ENCODE measurements at regions of chr3 and their contacts with region 1.

Region 1: DNA sequence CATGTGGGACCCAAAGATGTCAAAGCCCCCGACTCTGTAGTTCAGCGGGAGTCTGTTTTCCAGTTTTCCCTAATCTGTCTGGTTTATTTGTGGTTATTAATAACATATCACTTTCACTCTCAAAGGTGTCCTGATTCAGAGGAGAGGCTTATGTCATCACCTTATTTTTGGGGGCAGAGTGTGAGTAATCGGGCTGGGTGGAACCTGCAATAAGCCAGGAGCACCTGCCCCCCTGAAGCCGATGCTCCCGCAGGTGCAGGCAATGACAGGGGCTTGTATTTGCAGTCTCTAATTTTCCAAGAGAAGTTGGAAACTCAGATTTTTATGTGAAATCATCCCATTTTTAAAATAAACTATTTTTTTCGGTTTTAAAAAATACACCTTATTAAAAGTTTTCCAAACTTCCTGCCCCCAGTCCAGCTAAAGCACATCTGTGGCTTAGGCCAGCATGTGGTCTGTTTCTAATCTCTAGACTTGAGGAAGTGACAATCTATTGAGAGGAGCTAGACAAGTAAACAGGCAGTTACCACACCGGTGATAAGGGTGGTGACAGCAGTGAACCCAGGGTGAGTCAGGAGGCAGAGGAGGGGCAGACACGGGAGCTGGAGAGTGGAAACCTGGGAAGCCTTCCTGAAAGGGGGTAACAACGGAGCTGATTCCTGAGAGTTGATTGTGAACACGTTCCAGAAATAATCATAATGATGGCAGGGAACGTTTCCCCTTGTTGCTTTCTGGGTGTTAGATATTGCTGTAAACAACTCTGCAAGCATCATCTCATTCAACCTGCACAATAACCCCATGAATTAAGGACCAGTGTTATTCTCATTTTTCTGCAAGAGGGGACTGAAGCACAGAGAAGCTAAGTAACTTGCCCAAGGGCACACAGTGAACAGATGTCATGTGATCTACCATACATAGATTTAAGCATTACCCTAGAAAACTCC is 37.3 kb downstream of the BHLHE40 start:
- DNase-seq: no peak
- ATAC-seq: peak; percentile 66

Region 2: GRCh38 chr3:4271834-4272233 is 744.7 kb before region 1 on chr3:
- intact Hi-C with region 1: no loop called
- DNase-seq: no peak
- ATAC-seq: no peak

Region 3: GRCh38 chr3:4754180-4755086 is 262.1 kb before region 1 on chr3:
- intact Hi-C with region 1: no loop called
- DNase-seq: no peak
- ATAC-seq: peak; percentile 26

Region 4: DNA sequence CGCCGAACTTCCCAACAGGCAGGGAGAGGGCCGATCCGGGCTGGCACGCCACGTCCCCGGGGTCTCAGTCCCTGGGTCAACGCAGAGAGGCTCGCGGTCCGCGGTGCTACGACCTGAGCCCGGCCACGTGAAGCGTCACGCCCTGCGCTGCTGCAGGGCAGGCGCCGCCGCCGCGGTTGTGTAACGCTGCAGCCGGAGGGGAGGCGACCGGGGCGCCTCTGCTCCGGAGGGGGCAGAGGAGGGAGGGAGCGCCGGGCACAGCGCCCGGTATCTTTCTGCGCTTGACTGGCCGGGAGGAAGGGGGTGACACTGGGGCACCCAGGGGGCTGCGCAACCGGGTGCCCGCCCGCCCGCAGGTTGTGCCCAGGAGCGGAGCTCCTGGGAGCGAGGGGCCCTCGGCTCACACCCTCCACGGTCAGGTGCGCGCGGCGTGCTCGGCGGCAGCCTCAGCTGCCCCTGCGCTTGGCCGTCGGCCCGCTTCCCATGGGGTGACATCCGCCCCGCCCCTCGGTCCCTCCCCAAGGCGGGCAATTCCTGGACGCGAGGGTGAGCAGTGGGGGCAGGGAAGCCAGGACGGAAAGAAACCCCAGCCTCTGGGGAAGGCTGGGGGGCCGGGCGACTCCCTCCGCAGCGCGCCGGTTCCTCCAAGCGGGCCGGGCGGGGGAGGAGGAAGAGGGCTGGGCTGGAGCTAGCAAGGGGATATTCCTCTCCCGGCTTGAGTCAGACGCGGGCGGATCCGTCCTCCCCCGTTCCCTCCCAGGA is 38.1 kb before region 1 on chr3:
- intact Hi-C with region 1: loop called (anchors 5 kb)
- DNase-seq: peak; percentile 98
- ATAC-seq: peak; percentile 79

Region 5: DNA sequence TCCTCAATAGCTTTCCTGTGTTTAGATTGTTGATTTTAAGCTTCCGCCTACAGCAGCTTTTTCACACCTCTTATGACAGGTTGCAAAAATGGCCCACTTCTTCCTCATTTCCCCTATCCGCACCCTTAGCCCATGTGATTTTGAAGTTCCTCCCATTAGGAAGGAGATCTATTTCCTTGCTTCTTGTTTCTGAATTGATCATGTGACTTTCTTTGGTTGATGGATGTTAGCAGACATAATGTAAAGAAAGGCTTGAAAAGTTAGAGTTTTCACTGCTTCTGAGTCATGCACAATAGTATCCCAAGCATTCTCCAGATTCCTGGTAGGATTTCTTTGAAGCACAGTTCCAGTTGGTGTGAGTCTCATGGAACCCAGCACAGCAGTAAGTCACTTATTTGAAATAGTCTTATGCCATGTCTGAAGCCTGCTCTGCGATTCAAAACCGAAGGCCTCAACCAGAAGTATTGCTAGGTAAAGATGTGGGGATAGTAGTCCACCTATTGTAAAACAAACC is 247.7 kb after region 1 on chr3:
- intact Hi-C with region 1: no loop called
- DNase-seq: no peak
- ATAC-seq: no peak

Region 6: DNA sequence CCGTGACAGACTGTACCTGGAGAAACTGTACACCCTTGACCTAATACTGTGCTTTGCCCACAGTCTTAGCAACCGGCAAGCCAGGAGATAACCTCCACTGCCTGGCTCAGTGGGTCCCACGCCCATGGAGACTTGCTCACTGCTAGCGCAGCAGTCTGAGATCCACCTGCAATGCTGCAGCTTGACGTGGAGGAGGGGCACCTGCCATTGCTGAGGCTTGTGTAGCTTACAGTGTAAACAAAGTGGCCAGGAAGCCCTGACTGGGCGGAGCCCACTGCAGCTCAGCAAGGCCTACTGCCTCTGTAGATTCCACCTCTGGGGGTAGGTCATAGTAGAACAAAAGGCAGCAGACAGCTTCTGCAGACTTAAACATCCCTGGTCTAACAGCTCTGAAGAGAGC is 360.3 kb after region 1 on chr3:
- intact Hi-C with region 1: no loop called
- DNase-seq: no peak
- ATAC-seq: no peak